AG04449 (cell line): ENCODE measurements at regions of chr3 and their contacts with region 1.

Region 1: DNA sequence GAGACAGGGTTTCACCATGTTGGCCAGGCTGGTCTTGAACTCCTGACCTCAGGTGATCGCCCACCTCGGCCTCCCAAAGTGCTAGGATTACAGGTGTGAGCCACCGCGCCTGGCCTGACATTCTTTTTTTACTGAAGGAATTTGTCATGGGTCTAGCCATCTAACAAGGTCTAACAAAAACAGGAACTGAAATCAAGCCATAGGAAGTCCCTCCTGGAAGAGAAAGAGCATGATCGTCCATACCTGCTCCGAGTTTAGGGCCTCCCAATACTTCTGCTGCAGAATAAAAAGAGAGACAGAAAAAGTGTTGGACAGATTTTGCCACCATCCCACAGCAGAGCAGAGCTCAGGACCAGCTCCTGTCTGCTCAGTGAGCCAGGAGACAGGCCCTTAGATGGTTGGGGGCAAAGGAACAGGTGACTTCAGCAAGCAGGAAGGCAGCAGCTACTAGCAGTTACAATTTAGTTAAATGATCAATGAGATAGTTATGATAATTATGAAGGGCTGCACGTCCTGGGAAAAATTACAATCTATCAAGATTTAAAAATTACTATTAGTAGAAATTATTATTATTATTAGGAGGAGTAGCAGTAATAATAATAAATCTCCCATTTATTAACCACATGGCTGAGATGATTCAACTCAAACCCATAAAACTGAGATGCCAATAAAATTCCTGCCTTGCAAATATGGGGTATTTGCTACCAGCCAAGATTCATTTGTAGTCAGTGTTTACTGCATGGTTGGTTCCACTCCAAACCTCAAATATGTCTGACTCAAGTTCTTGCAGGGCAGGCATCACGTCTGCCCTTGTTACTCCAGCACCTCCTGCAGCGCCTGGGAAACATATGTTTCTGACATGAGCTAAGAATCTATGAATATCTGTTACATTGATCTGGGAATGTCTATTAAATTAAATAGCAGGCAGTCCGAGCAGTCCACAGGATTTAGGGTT is 40.1 kb downstream of the TMEM44 start:
- DNase-seq: peak; percentile 100
- H3K4me3 ChIP-seq: no peak overlapping the region
- CTCF ChIP-seq: no peak

Region 2: DNA sequence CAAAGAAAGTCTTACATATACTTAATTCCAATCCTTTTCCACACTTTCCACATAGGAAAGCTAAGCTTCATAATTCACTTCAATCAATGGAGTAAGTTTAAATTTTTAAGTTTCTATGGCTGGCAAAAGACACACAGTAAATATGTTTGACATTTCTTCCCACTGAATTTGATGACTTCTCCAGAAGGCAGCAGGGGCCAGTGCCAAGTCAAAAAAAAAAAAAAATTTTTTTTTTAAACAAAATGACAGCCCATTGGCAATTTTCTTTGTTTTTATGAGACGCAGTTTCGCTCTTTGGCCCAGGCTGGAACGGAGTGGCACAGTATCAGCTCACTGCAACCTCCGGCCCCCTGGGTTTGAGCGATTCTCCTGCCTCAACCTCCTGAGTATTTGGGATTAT is 134.9 kb before region 1 on chr3:
- CTCF ChIA-PET with region 1: interaction called, 13 read pairs
- POLR2A ChIA-PET with region 1: no interaction called
- DNase-seq: no peak
- H3K4me3 ChIP-seq: no peak overlapping the region
- CTCF ChIP-seq: no peak

Region 3: DNA sequence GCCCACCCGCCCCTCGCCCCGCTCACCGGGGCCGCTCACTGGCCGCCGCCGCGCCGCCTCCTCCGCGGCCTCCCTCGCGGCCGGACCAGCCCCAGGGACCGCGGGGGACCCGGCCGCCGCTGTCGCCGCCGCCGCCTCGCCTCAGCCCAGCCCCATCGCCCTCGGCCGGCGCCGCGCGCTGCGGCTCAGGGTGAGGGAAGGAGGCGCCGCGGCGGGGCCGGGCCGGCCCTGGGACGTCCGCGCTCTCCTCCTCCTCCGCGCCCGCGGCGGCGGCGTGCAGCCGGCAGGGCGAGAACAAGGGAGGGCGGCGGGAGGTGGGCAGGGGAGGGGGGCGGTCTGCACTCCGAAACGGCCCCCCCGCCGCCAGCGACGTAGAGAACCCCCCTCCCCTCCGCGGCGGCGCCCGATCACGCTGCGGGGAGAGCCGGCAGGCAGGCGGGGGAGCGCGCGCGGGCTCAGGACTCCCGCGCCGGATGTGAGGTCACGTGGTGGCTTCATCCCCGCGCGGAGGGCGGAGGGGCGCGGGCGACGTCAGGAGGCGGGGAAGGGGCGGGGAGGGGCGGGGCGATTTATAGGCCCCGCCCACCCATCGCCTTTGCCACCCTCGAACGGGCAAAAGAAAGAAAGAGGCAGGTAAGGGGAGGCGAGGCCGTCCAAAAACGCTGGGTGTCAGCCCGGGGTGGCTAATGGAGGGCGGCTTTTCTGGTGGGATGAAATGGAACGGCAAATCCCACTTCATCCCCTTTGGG is 106.4 kb before region 1 on chr3 and contains the start of gene ATP13A3:
- CTCF ChIA-PET with region 1: interaction called, 25 read pairs
- POLR2A ChIA-PET with region 1: interaction called, 5 read pairs
- DNase-seq: no peak
- H3K4me3 ChIP-seq: peak within 1 kb of the TSS; percentile 84
- CTCF ChIP-seq: no peak

Region 4: GRCh38 chr3:194573691-194574437 is 19.2 kb before region 1 on chr3:
- CTCF ChIA-PET with region 1: interaction called, 19 read pairs
- POLR2A ChIA-PET with region 1: interaction called, 3 read pairs
- DNase-seq: no peak
- H3K4me3 ChIP-seq: no peak overlapping the region
- CTCF ChIP-seq: peak; percentile 67

Region 5: DNA sequence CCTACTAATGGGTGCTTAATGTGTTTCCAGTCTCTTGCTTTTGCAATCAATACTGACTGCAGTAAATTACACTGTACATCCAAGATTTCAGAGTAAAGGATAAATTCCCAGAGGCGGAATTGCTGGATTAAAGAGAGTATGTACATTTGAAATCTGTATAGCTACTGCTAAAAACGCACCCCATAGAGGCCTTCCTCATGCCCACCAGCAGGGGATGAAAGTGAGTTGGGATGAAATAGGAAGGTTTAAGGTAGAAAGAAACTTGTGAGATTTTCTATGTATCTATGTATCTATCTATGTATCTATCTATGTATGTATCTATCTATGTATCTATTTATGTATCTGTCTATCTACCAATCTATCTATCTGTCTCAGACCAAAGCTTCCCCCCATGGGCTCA is 11.8 kb after region 1 on chr3:
- CTCF ChIA-PET with region 1: interaction called, 34 read pairs
- POLR2A ChIA-PET with region 1: no interaction called
- DNase-seq: no peak
- H3K4me3 ChIP-seq: no peak overlapping the region
- CTCF ChIP-seq: peak; percentile 44

Region 6: DNA sequence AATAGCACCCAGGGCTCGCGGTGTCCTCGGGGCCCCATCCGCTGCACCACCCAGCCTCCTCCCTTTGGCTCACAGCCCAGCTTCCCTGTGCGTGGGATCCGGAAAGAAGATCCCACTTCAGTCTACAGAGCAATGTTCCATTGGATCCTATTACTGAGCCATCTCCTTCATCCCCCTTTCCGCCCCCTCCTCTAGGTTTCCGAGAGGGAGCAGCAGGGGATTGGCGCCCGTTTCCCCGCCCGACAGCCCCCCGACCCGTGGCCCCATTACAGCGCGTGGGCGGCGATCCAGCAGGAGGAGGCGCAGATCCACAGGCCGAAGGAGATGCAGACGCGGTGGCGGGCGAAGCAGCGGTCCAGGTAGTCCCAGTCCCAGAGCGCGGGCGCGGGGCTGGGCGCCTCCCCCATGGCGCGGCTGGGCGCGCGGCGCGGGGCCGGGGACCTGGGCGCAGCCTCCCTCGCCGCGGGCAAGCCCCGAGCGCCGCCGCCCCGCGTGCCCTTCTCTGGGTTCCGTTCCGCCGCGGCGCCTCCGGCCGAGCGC is 39.8 kb after region 1 on chr3:
- CTCF ChIA-PET with region 1: interaction called, 12 read pairs
- POLR2A ChIA-PET with region 1: no interaction called
- DNase-seq: no peak
- H3K4me3 ChIP-seq: peak overlapping the region; percentile 73
- CTCF ChIP-seq: no peak